Mammary epithelial cell (primary cell): ENCODE measurements at regions of chr5 and their contacts with region 1.

Region 1: GRCh38 chr5:38441453-38442246 is 114.8 kb downstream of the LIFR start:
- DNase-seq: peak; percentile 73
- H3K4me3 ChIP-seq: no peak overlapping the region
- H3K27ac ChIP-seq: no peak overlapping the region
- H3K4me1 ChIP-seq: no peaks in the 10 kb centered on the region
- H3K27me3 ChIP-seq: no peaks in the 10 kb centered on the region
- CTCF ChIP-seq: peak; percentile 98

Region 2: GRCh38 chr5:38208782-38209378 is 232.8 kb before region 1 on chr5:
- CTCF ChIA-PET with region 1: no interaction called
- dilution Hi-C with region 1: no loop called
- in situ Hi-C with region 1: no loop called
- intact Hi-C with region 1: loop called (anchors 1 kb)
- DNase-seq: peak; percentile 37
- H3K4me3 ChIP-seq: no peak overlapping the region
- H3K27ac ChIP-seq: no peak overlapping the region
- H3K4me1 ChIP-seq: no peaks in the 10 kb centered on the region
- H3K27me3 ChIP-seq: no peaks in the 10 kb centered on the region
- CTCF ChIP-seq: peak; percentile 39 to 75

Region 3: GRCh38 chr5:38420691-38421390 is 20.8 kb before region 1 on chr5:
- CTCF ChIA-PET with region 1: interaction called, 26 read pairs
- dilution Hi-C with region 1: no loop called
- in situ Hi-C with region 1: no loop called
- intact Hi-C with region 1: loop called (anchors 1 kb)
- DNase-seq: peak; percentile 57
- H3K4me3 ChIP-seq: no peak overlapping the region
- H3K27ac ChIP-seq: no peak overlapping the region
- H3K4me1 ChIP-seq: no peaks in the 10 kb centered on the region
- H3K27me3 ChIP-seq: no peaks in the 10 kb centered on the region
- CTCF ChIP-seq: peak; percentile 83 to 91

Region 4: GRCh38 chr5:38463634-38464521 is 22.2 kb after region 1 on chr5:
- CTCF ChIA-PET with region 1: interaction called, 6 read pairs
- dilution Hi-C with region 1: no loop called
- in situ Hi-C with region 1: no loop called
- intact Hi-C with region 1: loop called (anchors 1 kb)
- DNase-seq: peak; percentile 85
- H3K4me3 ChIP-seq: no peak overlapping the region
- H3K27ac ChIP-seq: peak overlapping the region; percentile 33
- H3K4me1 ChIP-seq: peaks cover 65% of the 10 kb centered on the region
- H3K27me3 ChIP-seq: no peaks in the 10 kb centered on the region
- CTCF ChIP-seq: no peak

Region 5: DNA sequence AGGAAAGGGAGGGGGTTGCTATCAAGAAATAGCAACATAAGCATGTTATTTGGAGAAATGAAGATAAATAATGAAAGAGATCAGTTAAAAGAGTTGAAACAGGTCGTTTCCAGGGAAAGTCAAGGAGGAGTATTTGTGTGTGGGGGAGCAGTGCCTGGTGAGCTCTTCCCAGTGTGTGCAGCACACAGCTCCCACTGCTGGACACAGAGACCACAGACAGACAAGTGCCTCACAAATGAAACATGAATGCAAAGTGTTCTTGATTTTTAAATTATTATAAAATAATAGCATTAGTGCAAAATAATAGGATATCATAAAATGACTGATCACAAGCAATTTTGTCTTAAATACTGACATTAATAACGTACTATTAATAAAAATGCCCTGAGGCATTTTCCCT is 74.0 kb after region 1 on chr5:
- CTCF ChIA-PET with region 1: interaction called, 30 read pairs
- dilution Hi-C with region 1: no loop called
- in situ Hi-C with region 1: no loop called
- intact Hi-C with region 1: loop called (anchors 1 kb)
- DNase-seq: no peak
- H3K4me3 ChIP-seq: no peak overlapping the region
- H3K27ac ChIP-seq: no peak overlapping the region
- H3K4me1 ChIP-seq: no peaks in the 10 kb centered on the region
- H3K27me3 ChIP-seq: no peaks in the 10 kb centered on the region
- CTCF ChIP-seq: peak; percentile 34 to 68

Region 6: DNA sequence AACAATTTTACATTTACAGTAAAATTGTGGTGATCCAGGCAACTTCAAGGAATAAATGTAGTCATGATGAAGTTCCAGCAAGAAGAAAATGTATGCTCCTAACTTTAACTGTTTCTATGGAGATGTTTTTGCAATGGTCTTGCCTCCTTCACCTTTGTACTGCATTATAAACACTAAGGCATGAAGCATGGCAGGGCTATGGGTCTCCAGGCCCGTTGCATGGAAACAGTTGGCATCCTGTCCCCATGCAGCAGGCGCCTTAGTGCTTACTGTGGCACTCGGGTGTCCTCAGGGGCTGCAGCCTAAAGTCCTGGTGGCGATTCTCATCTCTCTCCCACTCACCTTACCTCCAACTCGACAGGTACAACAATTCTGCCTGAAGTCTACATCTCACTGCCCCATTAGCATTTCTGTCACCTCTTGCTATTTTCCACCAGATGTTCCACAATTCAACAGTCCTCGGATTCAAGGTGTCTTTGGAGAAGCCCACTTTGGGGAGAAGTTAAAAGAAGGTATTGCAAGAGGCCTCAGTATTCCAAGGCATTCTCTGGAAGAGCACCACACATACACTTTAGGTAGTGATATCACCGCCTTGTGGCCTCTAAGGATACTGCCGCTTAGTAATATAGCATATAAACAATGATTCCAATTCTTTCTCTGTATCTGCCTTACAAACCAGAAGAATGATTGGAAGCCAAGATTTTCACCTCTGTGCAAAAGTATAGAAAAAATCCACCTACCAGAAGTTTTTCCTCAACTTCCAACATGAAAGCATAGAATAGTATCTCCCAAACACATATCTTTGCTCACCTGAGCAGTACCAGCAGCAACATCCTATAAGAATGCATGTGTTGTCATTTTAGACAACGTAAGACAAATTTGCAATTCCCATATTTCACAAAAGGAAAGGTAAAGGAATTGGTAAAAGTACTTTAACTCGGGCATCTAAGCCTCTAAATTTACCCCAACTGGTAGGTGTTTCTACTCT is 109.7 kb after region 1 on chr5:
- CTCF ChIA-PET with region 1: interaction called, 12 read pairs
- dilution Hi-C with region 1: no loop called
- in situ Hi-C with region 1: no loop called
- intact Hi-C with region 1: loop called (anchors 1 kb)
- DNase-seq: peak; percentile 23
- H3K4me3 ChIP-seq: no peak overlapping the region
- H3K27ac ChIP-seq: no peak overlapping the region
- H3K4me1 ChIP-seq: peaks cover 15% of the 10 kb centered on the region
- H3K27me3 ChIP-seq: no peaks in the 10 kb centered on the region
- CTCF ChIP-seq: peak; percentile 77 to 92